ENCODE measurements at regions of chr22 and their contacts with region 1.

Region 1: DNA sequence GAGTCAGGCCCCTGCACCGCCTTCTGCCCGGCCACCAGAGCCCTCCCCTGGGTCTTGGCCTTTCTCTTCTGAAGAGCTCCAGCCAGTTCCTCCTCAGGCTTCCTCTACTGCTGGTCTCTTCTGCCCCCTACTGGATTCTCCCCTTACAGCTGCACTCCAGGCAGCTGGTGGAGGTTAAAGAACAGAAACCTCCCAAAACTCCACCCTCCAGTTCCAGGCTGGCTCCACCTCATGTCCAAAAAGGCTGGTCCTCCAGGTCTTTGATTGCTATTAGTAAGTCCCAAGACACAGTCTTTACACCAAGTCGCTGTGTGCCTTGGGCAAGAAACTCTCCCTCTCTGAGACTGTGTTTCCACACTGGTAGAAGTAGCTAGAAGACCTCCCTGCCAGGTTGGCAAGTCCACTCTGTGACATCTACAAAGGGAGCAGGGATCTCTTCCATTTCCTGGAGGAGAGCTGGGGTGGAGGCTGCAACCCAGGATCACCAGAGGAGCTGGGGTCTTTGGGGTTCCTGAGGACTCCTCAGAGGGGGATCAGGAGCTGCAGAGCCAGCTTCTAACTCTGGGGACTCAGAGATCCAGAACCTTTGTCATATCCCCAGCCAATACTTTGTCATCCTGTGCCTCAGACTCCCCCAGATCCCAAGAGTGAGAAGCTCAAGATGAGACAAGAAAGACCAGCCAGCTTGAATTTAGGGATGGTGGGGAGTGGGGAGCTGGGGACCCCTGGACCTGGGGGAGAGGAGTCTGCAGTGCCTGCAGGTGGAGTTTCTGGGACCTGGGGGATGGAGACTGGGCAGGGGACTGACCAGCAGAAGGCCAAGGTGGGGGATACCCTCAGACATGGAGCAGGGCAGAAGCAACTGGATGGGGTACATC is 3.4 kb upstream of the IGLL5 start:
- DNase-seq: peak; percentile 86
- ATAC-seq: peak; percentile 59
- H3K4me3 ChIP-seq: peak overlapping the region in 2 of 5 experiments; percentile 11 to 44
- H3K4me3 Mint-ChIP-seq: peak overlapping the region; percentile 74
- H3K27ac ChIP-seq: peak overlapping the region; percentile 38 to 56
- H3K27ac Mint-ChIP-seq: peak overlapping the region; percentile 81
- H3K4me1 ChIP-seq: peaks cover 83 to 95% of the 10 kb centered on the region in 2 donors
- H3K4me1 Mint-ChIP-seq: peaks cover 94% of the 10 kb centered on the region
- H3K27me3 ChIP-seq: peaks cover 0 to 10% (median 3%) of the 10 kb centered on the region in 4 experiments
- H3K27me3 Mint-ChIP-seq: peaks cover 10% of the 10 kb centered on the region
- CTCF ChIP-seq: peak; percentile 77

Region 2: GRCh38 chr22:22422629-22423112 is 461.6 kb before region 1 on chr22:
- CTCF ChIA-PET with region 1: interaction called, 5 read pairs
- POLR2A ChIA-PET with region 1: interaction called, 3 read pairs
- intact Hi-C with region 1: loop called (anchors 5 kb)
- DNase-seq: peak; percentile 96
- ATAC-seq: peak; percentile 99
- H3K4me3 ChIP-seq: no peak overlapping the region
- H3K4me3 Mint-ChIP-seq: peak overlapping the region; percentile 33
- H3K27ac ChIP-seq: peak overlapping the region in 1 of 2 donors; percentile 42
- H3K27ac Mint-ChIP-seq: peak overlapping the region; percentile 72
- H3K4me1 ChIP-seq: peaks cover 61 to 63% of the 10 kb centered on the region in 2 donors
- H3K4me1 Mint-ChIP-seq: peaks cover 65% of the 10 kb centered on the region
- H3K27me3 ChIP-seq: no peaks in the 10 kb centered on the region
- H3K27me3 Mint-ChIP-seq: no peaks in the 10 kb centered on the region
- CTCF ChIP-seq: peak; percentile 92

Region 3: GRCh38 chr22:22692707-22693530 is 191.3 kb before region 1 on chr22:
- CTCF ChIA-PET with region 1: interaction called, 23 read pairs
- POLR2A ChIA-PET with region 1: no interaction called
- intact Hi-C with region 1: no loop called
- DNase-seq: peak; percentile 83
- ATAC-seq: peak; percentile 81
- H3K4me3 ChIP-seq: no peak overlapping the region
- H3K4me3 Mint-ChIP-seq: peak overlapping the region; percentile 71
- H3K27ac ChIP-seq: peak overlapping the region in 1 of 2 donors; percentile 26
- H3K27ac Mint-ChIP-seq: peak overlapping the region; percentile 85
- H3K4me1 ChIP-seq: peaks cover 28 to 44% of the 10 kb centered on the region in 2 donors
- H3K4me1 Mint-ChIP-seq: peaks cover 34% of the 10 kb centered on the region
- H3K27me3 ChIP-seq: no peaks in the 10 kb centered on the region
- H3K27me3 Mint-ChIP-seq: no peaks in the 10 kb centered on the region
- CTCF ChIP-seq: peak; percentile 87

Region 4: DNA sequence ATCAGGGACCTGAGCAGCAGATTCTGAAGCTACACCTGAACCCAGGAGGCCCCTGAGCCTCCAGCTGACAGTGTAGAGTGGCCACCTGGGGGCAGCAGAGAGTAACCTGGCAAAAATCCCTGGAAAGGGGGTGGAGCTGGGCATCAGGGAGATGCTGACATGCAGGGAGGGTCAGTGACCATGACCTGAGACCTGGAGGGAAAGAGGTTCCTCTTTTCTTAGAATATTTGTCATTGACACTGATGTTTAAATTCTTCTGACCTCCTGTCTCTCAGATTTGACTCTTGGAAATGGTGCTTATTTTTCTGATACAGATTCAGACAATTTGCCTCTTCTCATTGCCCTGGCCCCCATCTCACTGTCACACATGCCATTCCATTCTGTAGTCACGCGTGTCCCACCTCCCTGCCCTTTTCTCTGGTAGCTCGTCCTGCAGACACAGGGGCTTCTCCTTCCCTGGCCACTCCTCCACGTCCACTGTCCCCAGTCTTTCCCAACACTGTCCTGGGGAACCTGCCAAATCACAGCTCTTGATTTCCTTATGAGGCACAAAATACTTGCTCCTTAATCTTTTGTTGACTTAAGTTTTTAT is 113.9 kb before region 1 on chr22:
- CTCF ChIA-PET with region 1: interaction called, 12 read pairs
- POLR2A ChIA-PET with region 1: no interaction called
- intact Hi-C with region 1: no loop called
- DNase-seq: peak; percentile 60
- ATAC-seq: no peak
- H3K4me3 ChIP-seq: no peak overlapping the region
- H3K4me3 Mint-ChIP-seq: no peak overlapping the region
- H3K27ac ChIP-seq: no peak overlapping the region
- H3K27ac Mint-ChIP-seq: peak overlapping the region; percentile 47
- H3K4me1 ChIP-seq: peaks cover 22 to 39% of the 10 kb centered on the region in 2 donors
- H3K4me1 Mint-ChIP-seq: peaks cover 32% of the 10 kb centered on the region
- H3K27me3 ChIP-seq: peaks cover 0 to 10% (median 3%) of the 10 kb centered on the region in 4 experiments
- H3K27me3 Mint-ChIP-seq: peaks cover 28% of the 10 kb centered on the region
- CTCF ChIP-seq: peak; percentile 67

Region 5: DNA sequence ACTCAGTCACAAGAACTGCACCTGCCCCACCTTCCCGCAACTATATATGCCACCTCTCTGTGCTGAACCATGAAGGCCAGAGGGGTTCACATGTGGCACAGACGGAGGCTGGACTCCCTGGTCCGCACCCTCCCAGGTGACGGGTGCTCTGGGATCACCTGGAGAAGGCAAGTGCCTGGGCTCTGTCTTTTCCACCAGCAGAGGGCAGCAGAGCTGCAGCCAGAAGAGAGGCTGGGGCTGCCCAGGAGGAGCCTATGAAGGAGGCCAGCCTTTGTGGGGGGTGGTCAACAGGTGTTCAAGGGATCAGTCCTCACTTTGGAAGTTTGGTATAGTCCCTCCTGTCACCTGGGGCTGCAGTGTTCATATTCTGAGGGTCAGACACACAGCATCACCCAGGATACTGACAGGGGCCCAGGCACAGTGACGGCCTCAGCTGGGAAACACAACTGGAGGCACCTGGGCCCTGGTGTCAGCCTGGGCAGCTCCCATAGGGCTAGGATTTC is 35.8 kb before region 1 on chr22:
- CTCF ChIA-PET with region 1: interaction called, 364 read pairs
- POLR2A ChIA-PET with region 1: interaction called, 10 read pairs
- intact Hi-C with region 1: no loop called
- DNase-seq: peak; percentile 83
- ATAC-seq: peak; percentile 77
- H3K4me3 ChIP-seq: no peak overlapping the region
- H3K4me3 Mint-ChIP-seq: no peak overlapping the region
- H3K27ac ChIP-seq: no peak overlapping the region
- H3K27ac Mint-ChIP-seq: peak overlapping the region; percentile 32
- H3K4me1 ChIP-seq: peaks cover 28 to 29% of the 10 kb centered on the region in 2 donors
- H3K4me1 Mint-ChIP-seq: peaks cover 29% of the 10 kb centered on the region
- H3K27me3 ChIP-seq: peaks cover 0 to 3% (median 0%) of the 10 kb centered on the region in 4 experiments
- H3K27me3 Mint-ChIP-seq: peaks cover 16% of the 10 kb centered on the region
- CTCF ChIP-seq: peak; percentile 87

Region 6: GRCh38 chr22:22894740-22895731 is 10.8 kb after region 1 on chr22:
- CTCF ChIA-PET with region 1: interaction called, 11 read pairs
- POLR2A ChIA-PET with region 1: interaction called, 3 read pairs
- intact Hi-C with region 1: no loop called
- DNase-seq: no peak
- ATAC-seq: peak; percentile 26
- H3K4me3 ChIP-seq: peak overlapping the region; percentile 17 to 75 (median 52)
- H3K4me3 Mint-ChIP-seq: peak overlapping the region; percentile 65
- H3K27ac ChIP-seq: peak overlapping the region; percentile 57 to 61
- H3K27ac Mint-ChIP-seq: peak overlapping the region; percentile 84
- H3K4me1 ChIP-seq: peaks cover 64 to 80% of the 10 kb centered on the region in 2 donors
- H3K4me1 Mint-ChIP-seq: peaks cover 77% of the 10 kb centered on the region
- H3K27me3 ChIP-seq: peaks cover 0 to 8% (median 1%) of the 10 kb centered on the region in 4 experiments
- H3K27me3 Mint-ChIP-seq: peaks cover 22% of the 10 kb centered on the region
- CTCF ChIP-seq: no peak

Region 7: GRCh38 chr22:22935546-22936157 is 51.4 kb after region 1 on chr22:
- CTCF ChIA-PET with region 1: interaction called, 181 read pairs
- POLR2A ChIA-PET with region 1: interaction called, 42 read pairs
- intact Hi-C with region 1: loop called (anchors 1 kb)
- DNase-seq: peak; percentile 97
- ATAC-seq: peak; percentile 89
- H3K4me3 ChIP-seq: peak overlapping the region in 2 of 5 experiments; percentile 7 to 37
- H3K4me3 Mint-ChIP-seq: peak overlapping the region; percentile 71
- H3K27ac ChIP-seq: peak overlapping the region; percentile 94 to 99
- H3K27ac Mint-ChIP-seq: peak overlapping the region; percentile 95
- H3K4me1 ChIP-seq: peaks cover 98 to 100% of the 10 kb centered on the region in 2 donors
- H3K4me1 Mint-ChIP-seq: peaks cover 98% of the 10 kb centered on the region
- H3K27me3 ChIP-seq: no peaks in the 10 kb centered on the region
- H3K27me3 Mint-ChIP-seq: no peaks in the 10 kb centered on the region
- CTCF ChIP-seq: peak; percentile 75

Region 8: DNA sequence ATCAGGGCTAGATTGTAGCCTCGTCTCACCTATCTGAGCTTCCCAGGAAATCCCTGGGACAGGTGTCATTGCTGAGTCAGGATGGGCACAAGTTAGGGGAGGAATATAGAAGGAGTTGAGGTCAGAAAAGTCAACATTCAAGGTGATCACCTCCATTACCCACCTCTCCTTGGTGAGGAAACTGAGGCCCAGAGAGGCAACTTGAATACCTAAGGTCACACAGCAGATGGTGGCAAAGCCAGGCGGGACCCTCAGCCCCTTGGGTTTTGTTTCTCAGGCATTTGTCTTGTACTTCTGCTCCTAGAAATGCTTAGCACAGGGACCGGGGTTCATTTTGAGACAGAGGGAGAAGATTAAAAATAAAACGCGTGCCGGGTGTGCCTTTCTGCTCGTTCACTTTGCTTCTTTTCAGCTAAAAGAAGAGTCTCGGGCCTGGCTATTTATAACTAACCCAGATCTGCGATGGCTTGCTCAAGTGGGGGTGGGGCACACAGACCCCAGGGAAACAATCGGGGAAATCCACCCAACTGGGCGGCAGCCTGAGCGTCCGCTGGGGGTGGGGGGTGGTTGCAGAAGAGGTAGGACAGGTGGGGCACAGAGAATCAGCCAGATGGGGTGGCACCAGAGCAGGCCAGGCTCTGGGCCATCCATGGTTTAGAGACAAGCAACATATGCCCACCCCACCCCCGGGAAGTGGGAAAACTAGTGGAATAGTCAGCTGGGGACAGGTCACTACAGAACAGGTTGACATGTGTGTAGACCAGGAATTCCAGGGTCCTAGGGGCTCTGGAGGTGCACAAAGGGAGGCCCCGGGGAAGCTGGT is 182.2 kb after region 1 on chr22:
- CTCF ChIA-PET with region 1: no interaction called
- POLR2A ChIA-PET with region 1: no interaction called
- intact Hi-C with region 1: no loop called
- DNase-seq: no peak
- ATAC-seq: no peak
- H3K4me3 ChIP-seq: no peak overlapping the region
- H3K4me3 Mint-ChIP-seq: no peak overlapping the region
- H3K27ac ChIP-seq: no peak overlapping the region
- H3K27ac Mint-ChIP-seq: no peak overlapping the region
- H3K4me1 ChIP-seq: peaks cover 6 to 25% of the 10 kb centered on the region in 2 donors
- H3K4me1 Mint-ChIP-seq: peaks cover 30% of the 10 kb centered on the region
- H3K27me3 ChIP-seq: no peaks in the 10 kb centered on the region
- H3K27me3 Mint-ChIP-seq: no peaks in the 10 kb centered on the region
- CTCF ChIP-seq: no peak